Panc1 (cell line): ENCODE measurements at regions of chr20 and their contacts with region 1.

Region 1: DNA sequence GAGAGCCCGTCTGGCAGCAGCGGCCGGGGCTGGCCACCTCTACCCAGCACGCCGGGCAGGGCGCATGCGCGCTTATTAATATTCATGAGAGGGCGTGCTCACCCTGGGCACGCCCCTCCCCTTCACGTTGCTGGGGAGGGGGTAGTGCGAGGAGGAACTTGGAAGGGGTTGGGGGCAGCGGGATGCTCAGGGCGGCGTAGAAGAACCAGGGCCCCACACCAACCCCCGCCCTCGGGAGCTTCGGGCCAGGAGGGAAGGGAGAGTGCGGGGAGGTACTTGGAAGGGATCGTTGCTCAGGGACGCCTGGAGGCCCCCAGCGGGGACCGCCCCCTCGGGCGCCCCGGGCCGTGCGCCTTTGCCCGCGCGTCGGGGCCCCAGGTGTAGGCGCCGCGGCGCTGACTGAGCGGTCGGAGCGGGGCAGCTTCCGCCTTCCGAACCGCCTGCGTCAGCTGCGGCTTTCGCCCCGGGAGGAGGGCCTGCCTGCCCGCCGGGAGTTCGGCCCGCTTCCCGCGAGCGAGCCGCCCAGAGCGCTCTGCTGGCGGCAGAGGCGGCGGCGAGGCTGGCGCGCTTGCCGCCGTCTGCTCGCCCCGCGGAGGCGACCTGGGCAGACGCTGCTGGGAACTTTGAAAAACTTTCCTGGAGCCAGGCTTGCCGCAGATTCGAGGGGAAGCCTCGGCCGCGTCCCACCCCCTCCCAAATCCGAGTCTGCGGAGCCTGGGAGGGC is at the start of gene JAG1:
- DNase-seq: peak; percentile 81
- ATAC-seq: peak; percentile 85
- H3K4me3 ChIP-seq: peak within 1 kb of the TSS; percentile 82 to 90
- H3K27ac ChIP-seq: peak within 1 kb of the TSS; percentile 82
- H3K4me1 ChIP-seq: peaks cover 13% of the 10 kb centered on the region
- H3K27me3 ChIP-seq: no peaks in the 10 kb centered on the region
- CTCF ChIP-seq: no peak
- total RNA-seq, gene JAG1: 21.2 TPM

Region 2: GRCh38 chr20:10553326-10553984 is 120.7 kb before region 1 on chr20:
- CTCF ChIA-PET with region 1: interaction called, 3 read pairs
- POLR2A ChIA-PET with region 1: interaction called, 3 read pairs
- in situ Hi-C with region 1: no loop called
- intact Hi-C with region 1: loop called (anchors 10 kb)
- DNase-seq: no peak
- ATAC-seq: peak; percentile 81
- H3K4me3 ChIP-seq: no peak overlapping the region
- H3K27ac ChIP-seq: peak overlapping the region; percentile 8; the same call in 1 of the 2 replicates
- H3K4me1 ChIP-seq: peaks cover 18% of the 10 kb centered on the region
- H3K27me3 ChIP-seq: no peaks in the 10 kb centered on the region
- CTCF ChIP-seq: peak; percentile 80; the same call in 1 of the 2 replicates

Region 3: GRCh38 chr20:10581823-10582222 is 92.3 kb before region 1 on chr20:
- CTCF ChIA-PET with region 1: no interaction called
- POLR2A ChIA-PET with region 1: no interaction called
- in situ Hi-C with region 1: no loop called
- intact Hi-C with region 1: no loop called
- DNase-seq: no peak
- ATAC-seq: no peak
- H3K4me3 ChIP-seq: no peak overlapping the region
- H3K27ac ChIP-seq: no peak overlapping the region
- H3K4me1 ChIP-seq: no peaks in the 10 kb centered on the region
- H3K27me3 ChIP-seq: no peaks in the 10 kb centered on the region
- CTCF ChIP-seq: no peak

Region 4: DNA sequence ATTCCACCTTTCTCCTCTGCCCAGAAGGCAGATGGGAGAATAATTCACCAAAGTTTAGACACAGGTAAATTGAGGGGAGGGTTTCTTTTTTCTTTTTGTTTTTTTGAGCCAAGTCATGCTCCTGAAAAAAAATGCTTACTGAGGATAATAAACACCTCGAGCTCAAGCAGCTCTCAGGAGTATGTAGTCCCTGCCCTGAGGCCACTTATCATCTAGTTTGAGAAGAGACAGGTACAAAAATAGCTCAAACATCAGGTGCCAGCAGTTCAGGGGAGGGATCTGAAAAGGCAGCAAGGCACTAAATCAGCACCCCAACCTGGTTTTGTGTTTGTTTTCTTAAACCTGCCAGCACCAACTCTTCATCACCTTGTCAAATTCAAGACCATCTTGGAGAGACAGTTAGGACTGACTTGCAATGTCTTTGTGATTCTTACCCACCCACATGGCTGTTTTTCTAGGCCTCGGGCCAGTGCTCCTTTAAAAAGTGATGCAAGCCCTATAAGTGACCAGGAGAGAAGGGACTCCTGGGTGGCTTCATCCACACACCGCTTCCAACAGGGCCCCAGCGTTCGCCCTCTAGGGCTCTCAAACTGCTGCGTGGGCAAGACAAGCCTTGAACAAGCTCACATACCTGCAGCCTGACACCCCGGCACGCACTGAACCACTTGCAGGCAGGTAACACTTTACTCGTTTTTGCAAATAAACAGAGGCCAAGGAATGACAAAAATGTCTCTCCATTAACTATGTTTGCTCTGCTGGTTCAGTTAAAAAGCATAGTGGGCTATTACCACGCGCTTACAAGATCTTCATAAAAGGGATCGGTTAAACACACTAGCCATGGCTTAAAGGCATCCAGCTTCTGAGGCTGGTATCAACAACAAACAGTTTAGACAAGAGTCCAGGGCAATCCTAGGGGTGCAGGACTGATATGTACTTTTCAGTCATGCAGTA is 14.2 kb before region 1 on chr20:
- CTCF ChIA-PET with region 1: no interaction called
- POLR2A ChIA-PET with region 1: interaction called, 12 read pairs
- in situ Hi-C with region 1: no loop called
- intact Hi-C with region 1: no loop called
- DNase-seq: no peak
- ATAC-seq: no peak; the same call in 1 of the 2 replicates
- H3K4me3 ChIP-seq: no peak overlapping the region
- H3K27ac ChIP-seq: no peak overlapping the region
- H3K4me1 ChIP-seq: peaks cover under 1% of the 10 kb centered on the region; the same call in 1 of the 2 replicates
- H3K27me3 ChIP-seq: no peaks in the 10 kb centered on the region
- CTCF ChIP-seq: no peak

Region 5: GRCh38 chr20:10747019-10747418 is 72.9 kb after region 1 on chr20:
- CTCF ChIA-PET with region 1: interaction called, 14 read pairs
- POLR2A ChIA-PET with region 1: no interaction called
- in situ Hi-C with region 1: no loop called
- intact Hi-C with region 1: no loop called
- DNase-seq: no peak
- ATAC-seq: no peak
- H3K4me3 ChIP-seq: no peak overlapping the region
- H3K27ac ChIP-seq: no peak overlapping the region
- H3K4me1 ChIP-seq: no peaks in the 10 kb centered on the region
- H3K27me3 ChIP-seq: no peaks in the 10 kb centered on the region
- CTCF ChIP-seq: no peak

Region 6: GRCh38 chr20:11274141-11274594 is 600.0 kb after region 1 on chr20:
- CTCF ChIA-PET with region 1: interaction called, 4 read pairs
- POLR2A ChIA-PET with region 1: no interaction called
- in situ Hi-C with region 1: no loop called
- intact Hi-C with region 1: loop called (anchors 2 kb)
- DNase-seq: peak; percentile 76
- ATAC-seq: peak; percentile 96
- H3K4me3 ChIP-seq: no peak overlapping the region
- H3K27ac ChIP-seq: peak overlapping the region; percentile 68; the same call in 1 of the 2 replicates
- H3K4me1 ChIP-seq: peaks cover 10% of the 10 kb centered on the region; the same call in 1 of the 2 replicates
- H3K27me3 ChIP-seq: no peaks in the 10 kb centered on the region
- CTCF ChIP-seq: peak; percentile 77

Region 7: DNA sequence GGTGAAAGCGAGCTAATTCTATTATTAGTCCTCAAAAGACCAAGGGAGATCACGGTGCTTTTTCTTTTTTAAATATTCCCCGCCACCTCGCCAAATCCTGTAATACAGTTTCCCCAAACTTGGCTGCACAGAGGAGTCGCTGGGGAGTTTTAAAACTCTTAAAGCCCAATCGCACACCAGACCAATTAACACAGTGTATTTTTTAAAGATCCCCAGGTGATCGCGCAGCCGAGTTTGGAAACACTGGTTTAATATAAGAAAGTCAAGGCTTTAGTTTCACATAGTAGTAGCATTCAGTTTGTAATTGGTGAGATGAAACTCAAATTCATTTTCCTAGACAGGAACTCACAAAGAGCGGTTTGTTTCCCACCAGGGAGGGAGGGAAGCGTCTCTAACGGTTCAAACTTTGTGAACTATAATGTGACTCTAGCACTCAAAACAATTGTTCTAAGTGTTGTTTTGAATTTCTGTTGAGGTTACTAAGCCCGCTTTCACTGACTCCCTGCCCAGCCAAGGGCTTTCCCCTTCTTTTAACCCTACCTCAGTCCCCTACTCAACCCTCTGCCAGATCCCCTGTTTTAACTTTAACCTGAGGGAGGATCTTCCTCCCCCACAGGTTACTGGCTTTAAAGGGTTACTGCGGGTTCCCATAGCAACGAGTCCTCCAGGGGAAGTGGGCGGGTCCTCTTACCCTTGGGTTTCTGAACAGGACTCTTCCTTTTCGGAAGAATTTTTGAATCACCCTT is 1217.8 kb after region 1 on chr20:
- CTCF ChIA-PET with region 1: interaction called, 11 read pairs
- POLR2A ChIA-PET with region 1: no interaction called
- in situ Hi-C with region 1: no loop called
- intact Hi-C with region 1: no loop called
- DNase-seq: no peak
- ATAC-seq: peak; percentile 70
- H3K4me3 ChIP-seq: peak overlapping the region; percentile 66 to 80
- H3K27ac ChIP-seq: peak overlapping the region; percentile 95
- H3K4me1 ChIP-seq: peaks cover 19% of the 10 kb centered on the region
- H3K27me3 ChIP-seq: peaks cover 5% of the 10 kb centered on the region; the same call in 1 of the 2 replicates
- CTCF ChIP-seq: no peak